Natural killer cell (primary cell): ENCODE measurements at regions of chr17 and their contacts with region 1.

Region 1: GRCh38 chr17:38702166-38702899 is 2.7 kb upstream of the MLLT6 start:
- DNase-seq: peak; percentile 76 to 89
- ATAC-seq: peak; percentile 17 to 66 (median 48)
- H3K4me3 ChIP-seq: peak overlapping the region; percentile 77
- H3K4me3 Mint-ChIP-seq: peak overlapping the region; percentile 98
- H3K27ac ChIP-seq: peak overlapping the region; percentile 95
- H3K27ac Mint-ChIP-seq: peak overlapping the region; percentile 98 to 100
- H3K4me1 ChIP-seq: peaks cover 57% of the 10 kb centered on the region
- H3K4me1 Mint-ChIP-seq: peaks cover 44 to 72% of the 10 kb centered on the region in 2 donors
- H3K27me3 ChIP-seq: no peaks in the 10 kb centered on the region
- H3K27me3 Mint-ChIP-seq: no peaks in the 10 kb centered on the region
- CTCF ChIP-seq: no peak

Region 2: GRCh38 chr17:38674749-38675615 is 27.4 kb before region 1 on chr17 and contains the start of gene EPOP:
- intact Hi-C with region 1: loop called (anchors 2 kb)
- DNase-seq: peak; percentile 71 to 90
- ATAC-seq: peak; percentile 83 to 90 (median 89)
- H3K4me3 ChIP-seq: peak within 1 kb of the TSS; percentile 32
- H3K4me3 Mint-ChIP-seq: peak within 1 kb of the TSS; percentile 79
- H3K27ac ChIP-seq: no peak within 1 kb of the TSS
- H3K27ac Mint-ChIP-seq: peak within 1 kb of the TSS in 1 of 2 donors; percentile 52
- H3K4me1 ChIP-seq: peaks cover 20% of the 10 kb centered on the region
- H3K4me1 Mint-ChIP-seq: peaks cover 11 to 23% of the 10 kb centered on the region in 2 donors
- H3K27me3 ChIP-seq: peaks cover 38% of the 10 kb centered on the region
- H3K27me3 Mint-ChIP-seq: peaks cover 17 to 21% of the 10 kb centered on the region in 2 donors
- CTCF ChIP-seq: no peak
- total RNA-seq, gene EPOP: 0.66 to 1.9 (median 1.1) TPM

Region 3: GRCh38 chr17:38729886-38730525 is 27.7 kb after region 1 on chr17 and contains the start of gene CISD3:
- intact Hi-C with region 1: loop called (anchors 1 kb)
- DNase-seq: peak; percentile 88 to 95
- ATAC-seq: peak; percentile 68 to 89 (median 79)
- H3K4me3 ChIP-seq: peak within 1 kb of the TSS; percentile 69
- H3K4me3 Mint-ChIP-seq: peak within 1 kb of the TSS; percentile 95
- H3K27ac ChIP-seq: peak within 1 kb of the TSS; percentile 82
- H3K27ac Mint-ChIP-seq: peak within 1 kb of the TSS; percentile 98 to 99
- H3K4me1 ChIP-seq: peaks cover 83% of the 10 kb centered on the region
- H3K4me1 Mint-ChIP-seq: peaks cover 86 to 93% of the 10 kb centered on the region in 2 donors
- H3K27me3 ChIP-seq: no peaks in the 10 kb centered on the region
- H3K27me3 Mint-ChIP-seq: no peaks in the 10 kb centered on the region
- CTCF ChIP-seq: peak; percentile 59
- total RNA-seq, gene CISD3: 32.6 to 37.4 (median 33.9) TPM